ENCODE measurements at regions of chr2 and their contacts with region 1.

Region 1: DNA sequence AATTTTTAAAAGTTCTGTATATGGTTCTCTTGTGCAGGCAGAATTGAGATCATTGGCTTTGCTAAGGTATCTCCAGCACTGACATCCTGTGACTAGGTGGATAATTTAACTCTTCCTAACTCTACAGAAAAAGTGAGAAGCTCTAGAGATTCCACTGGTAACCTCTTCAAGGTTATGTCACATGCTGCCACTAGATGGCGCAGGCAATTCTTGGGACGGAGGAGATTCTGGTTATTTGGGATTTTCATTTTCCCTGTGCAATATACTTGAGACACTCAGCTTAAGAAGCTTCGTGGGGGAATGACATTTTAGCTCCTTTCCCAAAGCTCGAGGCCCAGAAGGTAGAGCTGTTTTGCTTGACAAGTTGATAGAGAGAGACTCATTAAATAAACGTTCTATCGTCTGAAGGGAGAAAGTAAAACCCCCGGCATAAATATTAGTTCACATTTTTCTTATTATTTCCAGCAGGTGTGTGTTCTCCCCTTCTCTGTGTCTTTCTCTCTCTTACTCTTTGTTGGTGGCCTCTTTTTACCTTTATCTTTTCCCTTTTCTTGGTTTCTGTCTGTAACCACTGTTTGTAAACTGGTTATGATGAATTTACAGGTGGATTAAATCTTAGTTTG is 26.6 kb upstream of the LANCL1 start:
- DNase-seq: no peak
- ATAC-seq: peak; percentile 89
- H3K4me3 ChIP-seq: no peak overlapping the region
- H3K27ac ChIP-seq: no peak overlapping the region
- H3K4me1 ChIP-seq: no peaks in the 10 kb centered on the region
- H3K27me3 ChIP-seq: no peaks in the 10 kb centered on the region
- CTCF ChIP-seq: peak; percentile 78 to 96 (median 91)
- EP300 ChIP-seq: no peak
- POLR2A ChIP-seq: no peak
- RAD21 ChIP-seq: peak; percentile 52; the same call in 1 of the 2 replicates

Region 2: GRCh38 chr2:210460322-210461227 is 42.5 kb before region 1 on chr2:
- CTCF ChIA-PET with region 1: interaction called, 17 read pairs
- POLR2A ChIA-PET with region 1: no interaction called
- RAD21 ChIA-PET with region 1: interaction called, 8 read pairs
- SMC1A ChIA-PET with region 1: interaction called, 5 read pairs
- in situ Hi-C with region 1: no loop called
- intact Hi-C with region 1: no loop called
- DNase-seq: no peak
- ATAC-seq: peak; percentile 79
- H3K4me3 ChIP-seq: no peak overlapping the region
- H3K27ac ChIP-seq: peak overlapping the region; percentile 28; the same call in 1 of the 2 replicates
- H3K4me1 ChIP-seq: peaks cover 14% of the 10 kb centered on the region
- H3K27me3 ChIP-seq: no peaks in the 10 kb centered on the region
- CTCF ChIP-seq: no peak
- EP300 ChIP-seq: peak in 1 of 2 experiments; percentile 38; a peak in 2 of 4 replicates
- POLR2A ChIP-seq: no peak
- RAD21 ChIP-seq: no peak

Region 3: DNA sequence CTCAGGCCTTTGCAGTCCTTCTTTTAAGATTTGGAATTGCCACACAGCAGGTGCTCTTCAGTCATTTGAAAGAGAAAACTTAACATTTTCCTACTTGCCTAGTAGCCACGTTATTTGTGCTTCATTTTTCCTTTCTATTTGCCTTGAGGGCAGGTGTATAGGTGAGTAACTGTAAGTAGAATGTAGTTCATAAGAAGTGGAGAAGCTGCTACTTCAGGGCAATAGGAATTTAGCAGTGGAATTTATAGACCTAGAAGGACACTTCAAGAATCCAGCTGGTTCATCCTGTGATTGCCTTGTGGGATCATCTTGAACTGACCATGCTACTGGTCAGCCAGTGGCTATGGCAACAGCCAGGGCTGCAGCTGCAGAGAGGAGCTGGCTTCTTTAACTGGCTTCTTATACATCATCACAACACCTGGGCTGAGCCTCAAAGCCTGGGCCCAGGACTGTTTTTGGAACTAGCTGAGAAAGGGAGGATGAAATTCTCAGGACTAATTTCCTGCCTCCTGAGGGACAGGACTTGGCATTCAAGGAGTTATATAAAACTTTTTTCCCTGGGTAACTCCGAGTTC is 21.4 kb before region 1 on chr2:
- CTCF ChIA-PET with region 1: interaction called, 14 read pairs
- POLR2A ChIA-PET with region 1: interaction called, 3 read pairs
- RAD21 ChIA-PET with region 1: no interaction called
- SMC1A ChIA-PET with region 1: interaction called, 12 read pairs
- in situ Hi-C with region 1: no loop called
- intact Hi-C with region 1: no loop called
- DNase-seq: no peak
- ATAC-seq: no peak
- H3K4me3 ChIP-seq: no peak overlapping the region
- H3K27ac ChIP-seq: no peak overlapping the region
- H3K4me1 ChIP-seq: no peaks in the 10 kb centered on the region
- H3K27me3 ChIP-seq: no peaks in the 10 kb centered on the region
- CTCF ChIP-seq: no peak
- EP300 ChIP-seq: no peak
- POLR2A ChIP-seq: no peak
- RAD21 ChIP-seq: no peak

Region 4: GRCh38 chr2:210527286-210527685 is 24.2 kb after region 1 on chr2:
- CTCF ChIA-PET with region 1: interaction called, 31 read pairs
- POLR2A ChIA-PET with region 1: no interaction called
- RAD21 ChIA-PET with region 1: interaction called, 3 read pairs
- SMC1A ChIA-PET with region 1: interaction called, 5 read pairs
- in situ Hi-C with region 1: no loop called
- intact Hi-C with region 1: no loop called
- DNase-seq: no peak
- ATAC-seq: no peak
- H3K4me3 ChIP-seq: no peak overlapping the region
- H3K27ac ChIP-seq: no peak overlapping the region
- H3K4me1 ChIP-seq: no peaks in the 10 kb centered on the region
- H3K27me3 ChIP-seq: no peaks in the 10 kb centered on the region
- CTCF ChIP-seq: no peak
- EP300 ChIP-seq: no peak
- POLR2A ChIP-seq: no peak
- RAD21 ChIP-seq: no peak

Region 5: DNA sequence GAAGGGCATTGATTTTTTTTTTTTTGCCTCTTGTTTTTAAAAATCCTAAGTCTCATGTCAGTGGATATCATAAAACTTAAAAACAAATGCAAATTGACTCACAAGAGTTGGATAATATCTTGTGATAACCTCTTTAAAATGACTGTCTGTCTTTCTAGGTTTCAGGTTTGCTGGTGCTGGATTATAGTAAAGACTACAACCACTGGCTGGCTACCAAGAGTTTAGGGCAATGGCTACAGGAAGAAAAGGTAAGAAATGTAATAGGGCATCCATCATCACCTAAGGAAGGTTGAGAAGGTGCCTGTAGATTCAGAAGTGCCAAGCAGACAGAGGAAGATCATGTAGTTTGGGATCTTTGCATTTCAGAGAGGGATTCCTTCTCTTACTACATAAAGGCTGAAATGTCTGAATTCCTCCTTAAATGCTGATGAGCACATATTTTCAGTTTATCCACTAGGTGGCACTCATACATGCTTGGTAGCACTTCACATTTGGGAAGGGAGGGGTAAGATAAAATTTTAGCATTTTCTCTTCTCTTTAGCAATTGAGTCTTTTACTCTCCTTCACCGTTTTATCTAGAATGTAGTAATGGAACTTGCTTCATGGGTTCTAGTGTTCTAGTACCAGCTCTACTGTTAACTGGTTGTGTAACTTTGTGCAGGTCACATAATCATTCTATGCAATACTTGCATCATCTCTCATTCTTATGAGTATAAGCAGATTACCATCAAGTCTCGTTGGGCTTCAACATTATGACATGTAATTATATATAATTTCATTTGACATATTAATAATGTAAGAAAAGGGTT is 74.4 kb after region 1 on chr2:
- CTCF ChIA-PET with region 1: interaction called, 13 read pairs
- POLR2A ChIA-PET with region 1: no interaction called
- RAD21 ChIA-PET with region 1: interaction called, 5 read pairs
- SMC1A ChIA-PET with region 1: no interaction called
- in situ Hi-C with region 1: no loop called
- intact Hi-C with region 1: no loop called
- DNase-seq: peak; percentile 1
- ATAC-seq: peak; percentile 93
- H3K4me3 ChIP-seq: no peak overlapping the region
- H3K27ac ChIP-seq: no peak overlapping the region
- H3K4me1 ChIP-seq: no peaks in the 10 kb centered on the region
- H3K27me3 ChIP-seq: no peaks in the 10 kb centered on the region
- CTCF ChIP-seq: peak; percentile 67 to 78 (median 75)
- EP300 ChIP-seq: no peak
- POLR2A ChIP-seq: no peak
- RAD21 ChIP-seq: peak; percentile 67

Region 6: GRCh38 chr2:211045025-211045424 is 541.9 kb after region 1 on chr2:
- CTCF ChIA-PET with region 1: no interaction called
- POLR2A ChIA-PET with region 1: no interaction called
- RAD21 ChIA-PET with region 1: no interaction called
- SMC1A ChIA-PET with region 1: no interaction called
- in situ Hi-C with region 1: no loop called
- intact Hi-C with region 1: no loop called
- DNase-seq: no peak
- ATAC-seq: no peak
- H3K4me3 ChIP-seq: no peak overlapping the region
- H3K27ac ChIP-seq: no peak overlapping the region
- H3K4me1 ChIP-seq: no peaks in the 10 kb centered on the region
- H3K27me3 ChIP-seq: no peaks in the 10 kb centered on the region
- CTCF ChIP-seq: no peak
- EP300 ChIP-seq: no peak
- POLR2A ChIP-seq: no peak
- RAD21 ChIP-seq: no peak